Adrenal gland (tissue), 19 donors: ENCODE measurements at regions of chr6 and their contacts with region 1.

Region 1: GRCh38 chr6:1604158-1605030 is 5.3 kb upstream of the FOXC1 start:
- DNase-seq: peak in 5 of 7 donors; percentile 49 to 64 (median 60)
- H3K4me3 ChIP-seq: peak overlapping the region in 1 of 4 donors; percentile 46
- H3K27ac ChIP-seq: no peak overlapping the region
- H3K4me1 ChIP-seq: peaks cover 0 to 18% of the 10 kb centered on the region in 2 donors
- H3K27me3 ChIP-seq: peaks cover 72% of the 10 kb centered on the region
- CTCF ChIP-seq: peak; percentile 50 to 98 (median 76)
- POLR2A ChIP-seq: no peak

Region 2: GRCh38 chr6:1739680-1740079 is 135.3 kb after region 1 on chr6:
- intact Hi-C with region 1: no loop called
- DNase-seq: no peak
- H3K4me3 ChIP-seq: no peak overlapping the region
- H3K27ac ChIP-seq: no peak overlapping the region
- H3K4me1 ChIP-seq: no peaks in the 10 kb centered on the region
- H3K27me3 ChIP-seq: no peaks in the 10 kb centered on the region
- CTCF ChIP-seq: no peak
- POLR2A ChIP-seq: no peak

Region 3: DNA sequence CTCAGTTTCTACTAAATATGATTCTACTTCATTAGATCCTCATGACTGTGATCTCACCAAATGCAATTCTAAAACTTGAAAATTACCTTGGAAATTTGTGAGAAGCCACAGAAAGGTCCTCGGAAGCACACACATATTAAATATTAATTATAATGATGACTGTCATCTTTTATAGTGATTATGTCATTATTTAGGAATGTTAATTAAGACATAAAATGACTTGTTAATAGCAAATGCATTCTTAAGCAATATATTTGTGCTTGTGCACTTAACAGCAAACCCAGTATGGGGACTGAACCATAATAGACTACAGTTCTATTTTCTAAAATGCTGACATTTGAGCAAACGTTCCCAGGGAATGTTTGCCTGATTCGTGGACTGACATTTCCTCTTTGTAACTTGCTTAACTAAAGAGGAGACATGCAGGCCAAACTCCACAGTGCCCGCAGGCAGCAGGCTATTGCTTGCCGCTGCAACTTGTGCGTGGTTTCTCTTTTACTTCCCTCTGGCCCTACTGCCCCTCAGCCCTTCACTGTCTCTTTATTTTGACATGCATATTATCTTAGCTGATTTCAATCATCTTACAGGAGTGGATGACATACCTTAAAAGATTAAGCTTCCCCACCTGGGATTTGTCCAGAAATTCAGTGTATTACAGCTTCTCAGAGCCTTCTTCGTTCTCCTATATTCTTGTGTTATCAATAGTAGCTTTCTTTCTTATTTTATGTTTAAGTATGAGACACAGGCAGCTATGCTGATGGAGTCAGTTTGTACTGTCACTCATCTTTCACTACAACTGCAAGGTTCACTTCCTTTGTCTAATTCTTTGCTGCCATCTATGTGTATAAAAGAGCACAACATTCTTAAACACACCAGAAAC is 499.5 kb after region 1 on chr6:
- intact Hi-C with region 1: loop called (anchors 5 kb)
- DNase-seq: peak in 1 of 7 donors; percentile 12
- H3K4me3 ChIP-seq: no peak overlapping the region
- H3K27ac ChIP-seq: no peak overlapping the region
- H3K4me1 ChIP-seq: peaks cover 0 to 6% of the 10 kb centered on the region in 2 donors
- H3K27me3 ChIP-seq: no peaks in the 10 kb centered on the region
- CTCF ChIP-seq: peak; percentile 34 to 74 (median 61)
- POLR2A ChIP-seq: no peak

Region 4: DNA sequence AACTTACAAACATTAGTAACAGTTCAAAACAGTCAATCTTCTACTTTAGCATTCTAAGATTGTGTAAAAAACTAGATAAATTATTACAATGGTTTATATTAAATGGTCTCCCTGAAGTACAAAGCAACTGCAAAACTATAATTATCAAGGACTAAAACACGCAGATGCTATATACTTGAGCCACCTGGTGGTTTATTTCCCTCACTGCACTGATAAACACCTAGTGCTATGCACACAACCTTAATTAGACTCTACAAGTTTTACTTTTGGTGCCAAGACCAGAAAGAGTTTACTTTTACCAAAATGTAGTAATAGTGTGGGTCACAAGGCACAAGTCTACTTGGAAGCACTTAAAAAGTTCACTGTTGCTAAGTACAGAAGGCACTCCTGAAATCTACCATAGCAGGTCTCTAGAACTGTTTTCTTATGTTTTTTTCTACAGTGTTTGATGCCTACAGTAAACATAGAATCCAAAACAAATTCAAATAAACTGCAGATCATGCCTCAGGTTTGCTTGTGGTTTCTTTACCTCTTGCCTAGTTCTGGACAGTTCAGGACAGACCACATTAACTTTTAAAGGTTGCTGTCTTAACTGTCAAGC is 591.8 kb after region 1 on chr6:
- intact Hi-C with region 1: loop called (anchors 5 to 10 kb)
- DNase-seq: peak in 5 of 7 donors; percentile 18 to 55 (median 33)
- H3K4me3 ChIP-seq: no peak overlapping the region
- H3K27ac ChIP-seq: no peak overlapping the region
- H3K4me1 ChIP-seq: peaks cover 0 to 9% of the 10 kb centered on the region in 2 donors
- H3K27me3 ChIP-seq: no peaks in the 10 kb centered on the region
- CTCF ChIP-seq: peak; percentile 61 to 77 (median 72)
- POLR2A ChIP-seq: no peak